ENCODE measurements at regions of chr2 and their contacts with region 1.

Region 1: DNA sequence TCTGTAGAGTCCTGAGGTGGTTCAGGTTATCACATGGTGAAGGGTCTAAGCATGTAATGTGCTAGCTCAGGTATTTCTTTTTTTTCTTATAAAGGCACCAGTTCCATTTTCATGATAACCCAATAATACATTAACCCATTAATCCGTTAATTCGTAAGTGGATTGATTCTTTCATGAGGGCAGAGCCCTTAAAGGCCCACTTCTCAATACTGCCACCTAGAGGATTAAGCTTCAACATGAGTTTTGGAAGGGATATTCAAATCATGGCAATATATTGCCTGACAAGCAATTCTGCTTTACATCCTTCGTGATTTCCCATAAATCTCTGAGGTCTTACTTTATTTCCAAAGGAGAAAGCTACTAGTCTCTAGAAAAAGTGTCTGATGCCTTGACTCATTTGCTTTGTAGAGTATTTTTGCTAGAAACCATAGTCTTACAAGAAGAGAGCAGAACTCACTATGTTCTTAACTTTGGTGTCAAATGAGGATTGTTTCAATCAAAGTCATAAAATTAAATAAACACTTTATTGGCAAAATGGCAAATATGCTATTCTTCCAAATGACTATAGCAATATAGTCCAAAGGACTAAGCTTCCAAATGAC is 271.3 kb downstream of the KCNS3 start:
- DNase-seq: peak; percentile 60
- H3K4me3 ChIP-seq: no peak overlapping the region
- H3K27ac ChIP-seq: no peak overlapping the region
- H3K4me1 ChIP-seq: no peaks in the 10 kb centered on the region
- H3K27me3 ChIP-seq: peaks cover 1 to 3% of the 10 kb centered on the region in 2 experiments
- CTCF ChIP-seq: peak; percentile 39 to 66
- POLR2A ChIP-seq: no peak

Region 2: DNA sequence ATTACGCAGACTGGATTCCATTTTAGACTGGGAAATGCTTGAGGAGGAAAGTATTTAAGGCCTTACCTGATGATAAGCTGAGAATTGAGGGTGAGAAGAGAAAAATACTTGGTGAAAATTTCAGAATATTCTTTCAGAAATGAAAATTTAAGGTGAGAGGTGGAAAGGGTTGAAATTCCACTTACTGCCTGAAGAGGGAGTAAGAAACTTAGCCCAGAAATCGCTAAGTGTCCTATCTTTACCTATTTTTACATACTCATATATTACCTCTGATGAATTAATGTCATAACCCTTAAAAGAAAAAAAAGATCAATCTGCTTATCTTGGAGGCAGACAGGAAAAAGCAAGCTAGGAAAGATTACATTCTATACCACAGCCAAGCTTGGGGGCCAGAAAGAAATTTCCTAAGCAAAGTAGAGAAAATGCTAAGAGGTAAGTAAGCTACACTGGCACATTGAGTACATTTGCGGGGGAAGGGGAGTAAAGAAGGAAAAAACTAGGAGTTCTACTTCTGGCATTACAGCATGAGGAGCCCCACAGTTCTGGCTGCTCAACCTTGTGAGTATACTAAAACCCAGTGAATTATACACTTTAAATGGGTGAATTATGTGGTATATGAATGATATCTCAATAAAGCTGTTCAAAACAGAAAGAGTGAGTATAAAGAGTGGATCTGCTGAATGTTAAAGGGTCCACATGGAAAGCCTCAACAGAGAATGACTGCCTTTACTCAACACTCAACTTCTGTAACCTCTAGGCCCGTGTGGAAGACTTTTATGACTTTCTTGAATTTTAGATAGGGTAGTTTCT is 430.0 kb before region 1 on chr2:
- CTCF ChIA-PET with region 1: interaction called, 6 read pairs
- POLR2A ChIA-PET with region 1: no interaction called
- dilution Hi-C with region 1: no loop called
- intact Hi-C with region 1: loop called (anchors 1 kb)
- DNase-seq: peak; percentile 79
- H3K4me3 ChIP-seq: no peak overlapping the region
- H3K27ac ChIP-seq: no peak overlapping the region
- H3K4me1 ChIP-seq: no peaks in the 10 kb centered on the region
- H3K27me3 ChIP-seq: no peaks in the 10 kb centered on the region
- CTCF ChIP-seq: peak; percentile 46 to 49
- POLR2A ChIP-seq: no peak

Region 3: GRCh38 chr2:17851731-17852585 is 297.8 kb before region 1 on chr2:
- CTCF ChIA-PET with region 1: interaction called, 4 read pairs
- POLR2A ChIA-PET with region 1: no interaction called
- dilution Hi-C with region 1: no loop called
- intact Hi-C with region 1: loop called (anchors 1 kb)
- DNase-seq: peak; percentile 51
- H3K4me3 ChIP-seq: no peak overlapping the region
- H3K27ac ChIP-seq: no peak overlapping the region
- H3K4me1 ChIP-seq: no peaks in the 10 kb centered on the region
- H3K27me3 ChIP-seq: no peaks in the 10 kb centered on the region
- CTCF ChIP-seq: peak; percentile 72 to 79
- POLR2A ChIP-seq: no peak

Region 4: DNA sequence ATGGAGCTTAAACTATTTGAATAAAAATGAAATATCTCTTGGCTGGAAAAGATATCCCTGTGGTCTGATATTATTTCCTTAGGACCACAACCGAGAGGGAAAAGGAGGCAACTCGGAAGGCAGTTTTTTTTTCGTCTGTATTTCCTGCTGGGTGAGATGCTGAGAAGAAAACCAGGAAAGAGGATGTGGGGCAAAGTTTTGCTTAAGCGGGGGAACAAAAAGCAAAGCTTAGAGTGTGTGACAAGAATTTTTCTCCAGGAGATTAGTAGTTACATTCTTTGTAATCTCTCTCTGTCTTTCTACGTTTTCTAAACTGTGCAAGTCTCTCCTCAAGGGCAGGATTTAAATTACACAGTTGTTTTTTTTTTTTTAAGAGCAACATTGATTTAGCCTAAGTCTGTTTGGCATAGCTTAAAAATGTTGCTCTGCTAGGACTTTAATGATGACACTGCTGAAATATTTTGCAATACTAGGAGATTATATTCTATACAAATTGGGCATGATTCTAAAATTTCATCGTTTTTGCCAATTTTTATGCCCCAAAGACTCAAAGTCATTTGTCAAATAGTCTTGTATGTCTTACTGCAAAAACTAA is 12.8 kb before region 1 on chr2:
- CTCF ChIA-PET with region 1: interaction called, 19 read pairs
- POLR2A ChIA-PET with region 1: no interaction called
- dilution Hi-C with region 1: no loop called
- intact Hi-C with region 1: no loop called
- DNase-seq: no peak
- H3K4me3 ChIP-seq: no peak overlapping the region
- H3K27ac ChIP-seq: no peak overlapping the region
- H3K4me1 ChIP-seq: no peaks in the 10 kb centered on the region
- H3K27me3 ChIP-seq: no peaks in the 10 kb centered on the region
- CTCF ChIP-seq: no peak
- POLR2A ChIP-seq: no peak

Region 5: DNA sequence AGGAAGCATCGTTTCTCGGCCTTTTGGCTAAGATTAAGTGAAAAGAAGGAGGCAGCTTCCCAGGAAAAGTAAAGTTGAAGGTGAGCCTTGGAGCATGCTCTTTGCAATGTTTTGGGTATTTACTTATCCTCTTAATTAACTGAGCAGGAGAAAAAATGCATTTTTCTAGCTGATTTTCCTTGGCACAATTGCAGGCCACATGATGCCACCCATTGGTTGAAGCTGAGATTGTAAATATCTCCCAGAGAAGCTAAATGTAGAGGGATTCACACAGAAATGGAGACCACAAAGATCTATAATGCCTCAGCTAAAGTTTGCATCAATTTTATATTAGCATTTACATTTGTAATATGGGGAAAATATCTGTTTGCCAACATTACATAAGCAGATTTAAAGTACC is 22.9 kb after region 1 on chr2:
- CTCF ChIA-PET with region 1: interaction called, 11 read pairs
- POLR2A ChIA-PET with region 1: no interaction called
- dilution Hi-C with region 1: no loop called
- intact Hi-C with region 1: no loop called
- DNase-seq: no peak
- H3K4me3 ChIP-seq: no peak overlapping the region
- H3K27ac ChIP-seq: no peak overlapping the region
- H3K4me1 ChIP-seq: no peaks in the 10 kb centered on the region
- H3K27me3 ChIP-seq: no peaks in the 10 kb centered on the region
- CTCF ChIP-seq: no peak
- POLR2A ChIP-seq: no peak

Region 6: GRCh38 chr2:18178736-18179349 is 29.1 kb after region 1 on chr2:
- CTCF ChIA-PET with region 1: interaction called, 11 read pairs
- POLR2A ChIA-PET with region 1: no interaction called
- dilution Hi-C with region 1: no loop called
- intact Hi-C with region 1: no loop called
- DNase-seq: peak; percentile 65
- H3K4me3 ChIP-seq: no peak overlapping the region
- H3K27ac ChIP-seq: no peak overlapping the region
- H3K4me1 ChIP-seq: no peaks in the 10 kb centered on the region
- H3K27me3 ChIP-seq: peaks cover 0 to 2% of the 10 kb centered on the region in 2 experiments
- CTCF ChIP-seq: peak; percentile 62 to 67
- POLR2A ChIP-seq: no peak

Region 7: DNA sequence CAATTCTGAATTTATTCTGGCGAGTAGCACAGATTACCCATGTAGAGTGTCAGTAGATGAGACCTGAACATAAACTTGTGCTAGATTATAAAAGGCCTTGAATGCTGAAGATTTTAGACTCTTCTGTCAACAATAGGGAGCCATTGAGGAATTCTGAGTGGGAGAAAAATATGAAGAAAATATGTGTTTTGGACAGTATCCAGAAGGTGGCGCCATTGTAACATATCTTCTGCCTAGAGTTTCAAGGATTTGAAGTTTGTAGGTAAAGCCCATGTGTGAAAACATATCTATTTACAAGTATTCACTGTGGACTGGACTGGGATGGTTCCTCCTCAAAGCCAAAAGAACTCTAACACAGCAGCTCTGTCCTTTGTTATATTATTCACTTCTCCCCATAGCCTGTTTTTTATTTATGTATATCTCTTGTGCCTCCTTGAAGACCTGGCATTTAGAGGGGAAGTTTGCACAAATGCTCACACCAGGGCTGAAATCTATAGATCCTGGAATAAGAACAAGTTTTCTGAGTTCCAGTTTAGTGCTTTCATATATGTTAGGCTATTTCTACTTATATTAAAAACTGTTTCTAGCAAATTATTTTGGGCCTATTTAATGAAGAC is 285.8 kb after region 1 on chr2:
- CTCF ChIA-PET with region 1: no interaction called
- POLR2A ChIA-PET with region 1: no interaction called
- dilution Hi-C with region 1: no loop called
- intact Hi-C with region 1: loop called (anchors 1 kb)
- DNase-seq: peak; percentile 75
- H3K4me3 ChIP-seq: no peak overlapping the region
- H3K27ac ChIP-seq: no peak overlapping the region
- H3K4me1 ChIP-seq: peaks cover 5% of the 10 kb centered on the region
- H3K27me3 ChIP-seq: no peaks in the 10 kb centered on the region
- CTCF ChIP-seq: peak; percentile 39 to 51
- POLR2A ChIP-seq: no peak